ENCODE measurements at regions of chr3 and their contacts with region 1.

Region 1: GRCh38 chr3:197828-198491 is 1.4 kb downstream of the CHL1 start:
- DNase-seq: peak; percentile 38
- ATAC-seq: peak; percentile 67
- H3K4me3 Mint-ChIP-seq: peak overlapping the region; percentile 86
- H3K27ac Mint-ChIP-seq: no peak overlapping the region
- H3K4me1 Mint-ChIP-seq: peaks cover 6% of the 10 kb centered on the region
- H3K27me3 Mint-ChIP-seq: peaks cover 14% of the 10 kb centered on the region
- CTCF ChIP-seq: no peak

Region 2: GRCh38 chr3:123341-123740 is 74.6 kb before region 1 on chr3:
- CTCF ChIA-PET with region 1: no interaction called
- POLR2A ChIA-PET with region 1: no interaction called
- intact Hi-C with region 1: no loop called
- DNase-seq: no peak
- ATAC-seq: no peak
- H3K4me3 Mint-ChIP-seq: no peak overlapping the region
- H3K27ac Mint-ChIP-seq: no peak overlapping the region
- H3K4me1 Mint-ChIP-seq: peaks cover 4% of the 10 kb centered on the region
- H3K27me3 Mint-ChIP-seq: no peaks in the 10 kb centered on the region
- CTCF ChIP-seq: no peak

Region 3: GRCh38 chr3:166071-166470 is 31.9 kb before region 1 on chr3:
- CTCF ChIA-PET with region 1: no interaction called
- POLR2A ChIA-PET with region 1: no interaction called
- intact Hi-C with region 1: no loop called
- DNase-seq: no peak
- ATAC-seq: no peak
- H3K4me3 Mint-ChIP-seq: no peak overlapping the region
- H3K27ac Mint-ChIP-seq: no peak overlapping the region
- H3K4me1 Mint-ChIP-seq: no peaks in the 10 kb centered on the region
- H3K27me3 Mint-ChIP-seq: peaks cover 6% of the 10 kb centered on the region
- CTCF ChIP-seq: no peak

Region 4: GRCh38 chr3:212432-212831 is 14.5 kb after region 1 on chr3:
- CTCF ChIA-PET with region 1: no interaction called
- POLR2A ChIA-PET with region 1: no interaction called
- intact Hi-C with region 1: loop called (anchors 1 kb)
- DNase-seq: no peak
- ATAC-seq: peak; percentile 91
- H3K4me3 Mint-ChIP-seq: peak overlapping the region; percentile 64
- H3K27ac Mint-ChIP-seq: peak overlapping the region; percentile 83
- H3K4me1 Mint-ChIP-seq: peaks cover 21% of the 10 kb centered on the region
- H3K27me3 Mint-ChIP-seq: no peaks in the 10 kb centered on the region
- CTCF ChIP-seq: no peak

Region 5: GRCh38 chr3:294096-294495 is 96.1 kb after region 1 on chr3:
- CTCF ChIA-PET with region 1: no interaction called
- POLR2A ChIA-PET with region 1: interaction called, 3 read pairs
- intact Hi-C with region 1: loop called (anchors 5 kb)
- DNase-seq: no peak
- ATAC-seq: no peak
- H3K4me3 Mint-ChIP-seq: no peak overlapping the region
- H3K27ac Mint-ChIP-seq: no peak overlapping the region
- H3K4me1 Mint-ChIP-seq: peaks cover 51% of the 10 kb centered on the region
- H3K27me3 Mint-ChIP-seq: no peaks in the 10 kb centered on the region
- CTCF ChIP-seq: no peak

Region 6: GRCh38 chr3:550471-550870 is 352.5 kb after region 1 on chr3:
- CTCF ChIA-PET with region 1: no interaction called
- POLR2A ChIA-PET with region 1: no interaction called
- intact Hi-C with region 1: no loop called
- DNase-seq: no peak
- ATAC-seq: no peak
- H3K4me3 Mint-ChIP-seq: no peak overlapping the region
- H3K27ac Mint-ChIP-seq: no peak overlapping the region
- H3K4me1 Mint-ChIP-seq: no peaks in the 10 kb centered on the region
- H3K27me3 Mint-ChIP-seq: no peaks in the 10 kb centered on the region
- CTCF ChIP-seq: no peak

Measured in activated B cell treated with CpG ODN at 0.5 μM for 24 hours (primary cell).